ENCODE measurements at regions of chr5 and their contacts with region 1.

Region 1: GRCh38 chr5:125412561-125413495 is 666.4 kb upstream of the ZNF608 start:
- DNase-seq: peak; percentile 70 to 75
- H3K4me3 ChIP-seq: no peak overlapping the region
- H3K4me3 Mint-ChIP-seq: peak overlapping the region; percentile 42
- H3K27ac Mint-ChIP-seq: peak overlapping the region; percentile 71
- H3K4me1 ChIP-seq: peaks cover 27% of the 10 kb centered on the region
- H3K4me1 Mint-ChIP-seq: peaks cover 31% of the 10 kb centered on the region
- H3K27me3 ChIP-seq: no peaks in the 10 kb centered on the region
- H3K27me3 Mint-ChIP-seq: no peaks in the 10 kb centered on the region
- CTCF ChIP-seq: peak in 1 of 2 experiments; percentile 59

Region 2: DNA sequence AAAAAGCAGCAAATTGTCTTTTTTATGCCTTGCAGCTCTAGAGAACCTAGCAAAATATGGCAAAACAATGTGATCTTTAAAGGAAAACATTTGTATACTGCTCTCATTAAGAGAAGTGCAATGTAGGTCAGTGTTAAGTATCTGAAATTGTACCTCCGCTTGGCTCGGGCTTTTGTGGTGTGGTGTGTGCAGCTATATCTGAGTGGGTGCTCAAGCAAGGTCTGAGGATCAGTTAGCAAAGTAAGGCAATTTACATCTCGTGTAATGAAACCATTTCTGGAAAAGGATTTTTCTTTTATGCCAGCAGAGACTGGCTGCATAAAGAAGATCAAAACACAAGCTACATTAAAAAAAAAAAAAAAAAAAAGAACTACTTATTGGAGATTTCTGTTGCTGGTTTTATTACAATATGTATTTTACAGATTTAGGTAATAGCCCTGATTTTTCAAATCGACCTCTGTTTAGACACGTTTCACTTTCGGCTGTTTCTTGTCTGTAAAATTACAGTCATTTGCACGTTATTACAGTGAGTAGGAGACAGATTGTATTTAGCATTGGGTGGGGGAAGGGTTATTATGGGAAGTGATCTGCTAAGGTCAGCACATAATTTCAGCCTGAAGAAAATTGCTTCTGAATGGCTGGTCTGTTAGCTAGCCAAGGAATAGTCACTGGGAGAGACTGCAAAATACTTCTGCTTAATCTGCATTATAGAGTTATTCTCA is 658.5 kb before region 1 on chr5:
- CTCF ChIA-PET with region 1: no interaction called
- POLR2A ChIA-PET with region 1: no interaction called
- intact Hi-C with region 1: loop called (anchors 5 kb)
- DNase-seq: no peak
- H3K4me3 ChIP-seq: no peak overlapping the region
- H3K4me3 Mint-ChIP-seq: no peak overlapping the region
- H3K27ac Mint-ChIP-seq: no peak overlapping the region
- H3K4me1 ChIP-seq: peaks cover 33% of the 10 kb centered on the region
- H3K4me1 Mint-ChIP-seq: peaks cover 12% of the 10 kb centered on the region
- H3K27me3 ChIP-seq: no peaks in the 10 kb centered on the region
- H3K27me3 Mint-ChIP-seq: no peaks in the 10 kb centered on the region
- CTCF ChIP-seq: no peak

Region 3: DNA sequence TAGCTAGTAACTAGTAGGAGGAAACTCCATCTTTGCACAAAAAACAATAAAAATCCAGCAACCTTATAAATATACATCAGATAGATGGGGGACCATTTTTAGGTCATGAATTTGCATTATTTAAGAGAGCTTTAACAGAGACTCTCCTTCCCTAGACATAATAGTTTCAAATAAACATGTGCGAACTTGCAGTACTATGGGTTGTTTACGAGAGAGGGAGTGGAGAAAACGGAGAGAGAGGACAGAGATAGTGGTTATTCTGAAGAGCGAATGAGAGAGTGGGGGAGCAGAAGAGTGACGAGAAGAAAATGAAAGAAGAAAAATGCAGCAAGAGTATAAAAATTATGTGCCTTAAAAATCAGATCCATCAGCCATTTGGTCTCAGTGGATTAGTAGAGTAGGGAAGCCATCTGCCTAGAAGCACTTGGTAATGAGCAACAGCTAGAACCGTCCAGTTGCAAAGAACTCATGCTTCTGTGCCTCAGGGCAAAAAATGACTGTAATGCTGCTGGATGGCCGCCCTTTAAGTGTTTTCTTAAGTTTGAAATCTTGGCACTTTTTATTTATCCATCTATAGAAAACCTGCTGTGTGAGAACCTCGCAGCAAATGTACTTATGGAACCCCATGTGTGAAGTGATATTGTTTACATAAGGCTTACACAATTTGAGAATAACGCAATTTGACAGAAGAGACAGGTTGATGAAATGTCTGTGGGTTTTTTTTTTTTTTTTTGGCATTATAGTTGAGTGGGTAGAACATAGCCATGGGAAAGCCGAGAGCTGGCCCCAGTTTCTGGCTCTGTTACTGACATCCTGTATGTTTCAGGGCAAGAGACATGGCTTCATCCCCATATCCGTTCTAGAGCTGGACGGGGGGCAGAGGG is 570.8 kb before region 1 on chr5:
- CTCF ChIA-PET with region 1: no interaction called
- POLR2A ChIA-PET with region 1: no interaction called
- intact Hi-C with region 1: no loop called
- DNase-seq: no peak
- H3K4me3 ChIP-seq: no peak overlapping the region
- H3K4me3 Mint-ChIP-seq: no peak overlapping the region
- H3K27ac Mint-ChIP-seq: no peak overlapping the region
- H3K4me1 ChIP-seq: no peaks in the 10 kb centered on the region
- H3K4me1 Mint-ChIP-seq: no peaks in the 10 kb centered on the region
- H3K27me3 ChIP-seq: no peaks in the 10 kb centered on the region
- H3K27me3 Mint-ChIP-seq: no peaks in the 10 kb centered on the region
- CTCF ChIP-seq: no peak

Region 4: GRCh38 chr5:125376059-125376641 is 36.7 kb before region 1 on chr5:
- CTCF ChIA-PET with region 1: no interaction called
- POLR2A ChIA-PET with region 1: no interaction called
- intact Hi-C with region 1: no loop called
- DNase-seq: no peak
- H3K4me3 ChIP-seq: no peak overlapping the region
- H3K4me3 Mint-ChIP-seq: no peak overlapping the region
- H3K27ac Mint-ChIP-seq: no peak overlapping the region
- H3K4me1 ChIP-seq: no peaks in the 10 kb centered on the region
- H3K4me1 Mint-ChIP-seq: no peaks in the 10 kb centered on the region
- H3K27me3 ChIP-seq: no peaks in the 10 kb centered on the region
- H3K27me3 Mint-ChIP-seq: no peaks in the 10 kb centered on the region
- CTCF ChIP-seq: no peak

Region 5: DNA sequence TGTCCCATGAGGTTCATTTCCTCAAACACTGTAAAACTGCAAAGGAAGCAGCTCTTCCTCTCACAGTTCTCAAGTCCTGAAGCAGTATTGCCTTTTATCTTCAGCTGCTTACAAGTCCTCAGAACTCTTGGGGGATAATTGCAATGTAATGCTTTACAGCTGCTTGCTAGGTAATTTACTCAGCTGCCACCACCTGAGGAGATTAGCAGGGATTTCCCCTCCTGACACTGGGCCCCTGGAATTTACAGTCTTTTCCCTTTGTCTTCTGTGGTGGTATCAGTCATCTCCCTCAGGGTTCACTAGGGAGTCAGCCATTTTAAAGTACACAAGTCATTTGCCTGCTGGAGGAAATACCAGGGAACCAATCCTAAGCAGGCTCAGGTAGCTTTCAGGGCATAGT is 256.1 kb after region 1 on chr5:
- CTCF ChIA-PET with region 1: no interaction called
- POLR2A ChIA-PET with region 1: no interaction called
- intact Hi-C with region 1: loop called (anchors 2 kb)
- DNase-seq: peak; percentile 84 to 91
- H3K4me3 ChIP-seq: no peak overlapping the region
- H3K4me3 Mint-ChIP-seq: no peak overlapping the region
- H3K27ac Mint-ChIP-seq: peak overlapping the region; percentile 79
- H3K4me1 ChIP-seq: peaks cover 25% of the 10 kb centered on the region
- H3K4me1 Mint-ChIP-seq: peaks cover 16% of the 10 kb centered on the region
- H3K27me3 ChIP-seq: no peaks in the 10 kb centered on the region
- H3K27me3 Mint-ChIP-seq: no peaks in the 10 kb centered on the region
- CTCF ChIP-seq: no peak

Region 6: GRCh38 chr5:125835293-125836172 is 422.7 kb after region 1 on chr5:
- CTCF ChIA-PET with region 1: interaction called, 3 read pairs
- POLR2A ChIA-PET with region 1: no interaction called
- intact Hi-C with region 1: loop called (anchors 2 kb)
- DNase-seq: peak; percentile 43 to 44
- H3K4me3 ChIP-seq: no peak overlapping the region
- H3K4me3 Mint-ChIP-seq: no peak overlapping the region
- H3K27ac Mint-ChIP-seq: no peak overlapping the region
- H3K4me1 ChIP-seq: no peaks in the 10 kb centered on the region
- H3K4me1 Mint-ChIP-seq: no peaks in the 10 kb centered on the region
- H3K27me3 ChIP-seq: no peaks in the 10 kb centered on the region
- H3K27me3 Mint-ChIP-seq: no peaks in the 10 kb centered on the region
- CTCF ChIP-seq: peak; percentile 69 to 71

Region 7: DNA sequence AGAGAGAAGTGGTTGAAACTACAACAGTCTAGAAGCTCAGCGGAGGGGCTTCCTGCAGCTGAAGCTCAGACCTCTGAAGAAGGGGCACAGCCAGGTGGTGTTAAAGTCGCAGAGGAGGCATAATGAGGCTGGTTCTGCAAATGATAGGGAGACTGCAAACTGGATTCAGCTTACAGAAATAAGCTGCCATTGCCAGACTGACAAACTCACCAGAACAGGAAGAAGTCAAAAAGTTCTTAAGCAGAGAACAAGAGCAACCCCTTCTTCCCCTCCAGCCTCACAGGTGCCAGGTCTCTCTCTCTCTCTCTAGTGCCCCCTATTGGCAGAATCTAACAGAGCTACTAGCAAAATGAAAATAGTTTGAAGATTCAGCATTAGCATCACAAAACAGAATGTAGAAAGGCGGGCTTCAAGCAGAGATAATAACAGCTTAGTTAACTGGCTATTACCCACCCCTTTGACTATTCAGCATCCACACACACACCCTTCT is 1087.1 kb after region 1 on chr5:
- CTCF ChIA-PET with region 1: no interaction called
- POLR2A ChIA-PET with region 1: no interaction called
- intact Hi-C with region 1: no loop called
- DNase-seq: peak in 1 of 2 experiments; percentile 24
- H3K4me3 ChIP-seq: no peak overlapping the region
- H3K4me3 Mint-ChIP-seq: no peak overlapping the region
- H3K27ac Mint-ChIP-seq: no peak overlapping the region
- H3K4me1 ChIP-seq: no peaks in the 10 kb centered on the region
- H3K4me1 Mint-ChIP-seq: no peaks in the 10 kb centered on the region
- H3K27me3 ChIP-seq: no peaks in the 10 kb centered on the region
- H3K27me3 Mint-ChIP-seq: no peaks in the 10 kb centered on the region
- CTCF ChIP-seq: peak; percentile 28 to 42

Measured in Caco-2 (cell line).